ENCODE measurements at regions of chr22 and their contacts with region 1.

Region 1: DNA sequence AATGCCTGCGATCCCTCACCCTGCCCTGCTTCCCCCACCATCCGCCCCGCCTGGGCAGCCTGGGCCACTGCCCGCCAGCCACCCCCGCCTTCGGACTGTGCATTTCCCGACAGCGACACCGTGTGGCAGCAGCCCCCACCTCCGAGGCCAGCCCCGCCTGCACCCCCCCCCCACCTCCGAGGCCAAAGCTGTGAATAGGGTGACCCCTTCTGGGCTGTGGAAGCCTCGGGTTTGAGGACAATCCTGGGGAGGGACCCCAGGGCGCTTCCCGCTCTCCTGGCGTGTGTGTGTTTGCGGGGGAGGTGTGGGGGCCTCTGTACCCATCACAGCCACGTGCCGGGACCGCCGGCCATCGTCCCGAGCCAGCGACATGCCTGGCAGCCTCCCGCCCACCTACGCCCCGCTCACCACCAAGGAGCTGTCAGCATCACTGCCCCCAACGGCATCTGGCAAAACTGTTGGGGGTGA is 33.8 kb upstream of the PPARA start:
- DNase-seq: peak; percentile 71 to 96
- H3K4me3 ChIP-seq: no peak overlapping the region
- H3K4me1 ChIP-seq: no peaks in the 10 kb centered on the region
- H3K27me3 ChIP-seq: no peaks in the 10 kb centered on the region

Region 2: GRCh38 chr22:45577746-45578523 is 538.6 kb before region 1 on chr22:
- in situ Hi-C with region 1: loop called (anchors 10 kb)
- DNase-seq: peak; percentile 66 to 92
- H3K4me3 ChIP-seq: no peak overlapping the region
- H3K4me1 ChIP-seq: no peaks in the 10 kb centered on the region
- H3K27me3 ChIP-seq: no peaks in the 10 kb centered on the region

Region 3: DNA sequence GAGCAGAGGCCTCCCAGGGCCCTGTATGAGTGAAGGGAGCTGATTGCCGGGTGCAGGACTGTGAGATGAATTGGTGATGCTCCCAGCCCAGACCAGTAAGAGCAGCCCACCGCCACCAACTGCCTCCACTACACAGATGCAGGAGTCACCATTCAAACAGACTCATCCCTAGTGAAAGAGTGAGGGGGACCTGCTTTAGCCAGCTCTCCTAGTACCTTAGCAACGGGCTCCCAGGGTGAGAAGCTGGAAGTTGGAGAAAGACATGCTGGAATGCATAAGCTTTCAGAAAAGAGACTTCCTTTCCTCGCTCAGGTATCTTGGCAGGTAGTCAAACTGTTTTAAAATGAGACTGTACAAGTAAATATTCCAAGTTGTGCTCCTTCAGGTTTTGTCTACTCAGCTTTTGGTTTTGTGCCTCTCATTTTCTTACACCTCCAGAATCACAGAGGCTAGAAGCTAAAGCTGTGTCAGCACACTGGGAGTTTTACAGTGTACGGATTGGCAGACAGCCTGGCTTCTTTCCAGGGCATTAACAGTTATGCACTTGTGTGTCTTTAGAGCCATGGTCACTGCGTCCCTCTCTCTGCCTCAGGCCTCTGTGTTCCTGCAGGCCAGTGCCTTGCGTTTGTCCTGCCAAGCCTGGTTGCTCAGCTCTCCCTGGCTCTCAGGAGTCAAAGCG is 298.6 kb before region 1 on chr22:
- in situ Hi-C with region 1: no loop called
- DNase-seq: no peak
- H3K4me3 ChIP-seq: no peak overlapping the region
- H3K4me1 ChIP-seq: no peaks in the 10 kb centered on the region
- H3K27me3 ChIP-seq: no peaks in the 10 kb centered on the region